ENCODE measurements at regions of chr14 and their contacts with region 1.

Region 1: GRCh38 chr14:95196290-95196689 is 39.0 kb upstream of the DICER1 start:
- DNase-seq: peak in 6 of 9 donors; percentile 3 to 40 (median 29)
- ATAC-seq: peak; percentile 73
- H3K4me3 ChIP-seq: no peak overlapping the region
- H3K4me3 Mint-ChIP-seq: no peak overlapping the region
- H3K27ac ChIP-seq: no peak overlapping the region
- H3K27ac Mint-ChIP-seq: no peak overlapping the region
- H3K4me1 ChIP-seq: no peaks in the 10 kb centered on the region
- H3K4me1 Mint-ChIP-seq: peaks cover 0 to 8% (median 5%) of the 10 kb centered on the region in 7 donors
- H3K27me3 ChIP-seq: no peaks in the 10 kb centered on the region
- H3K27me3 Mint-ChIP-seq: no peaks in the 10 kb centered on the region

Region 2: DNA sequence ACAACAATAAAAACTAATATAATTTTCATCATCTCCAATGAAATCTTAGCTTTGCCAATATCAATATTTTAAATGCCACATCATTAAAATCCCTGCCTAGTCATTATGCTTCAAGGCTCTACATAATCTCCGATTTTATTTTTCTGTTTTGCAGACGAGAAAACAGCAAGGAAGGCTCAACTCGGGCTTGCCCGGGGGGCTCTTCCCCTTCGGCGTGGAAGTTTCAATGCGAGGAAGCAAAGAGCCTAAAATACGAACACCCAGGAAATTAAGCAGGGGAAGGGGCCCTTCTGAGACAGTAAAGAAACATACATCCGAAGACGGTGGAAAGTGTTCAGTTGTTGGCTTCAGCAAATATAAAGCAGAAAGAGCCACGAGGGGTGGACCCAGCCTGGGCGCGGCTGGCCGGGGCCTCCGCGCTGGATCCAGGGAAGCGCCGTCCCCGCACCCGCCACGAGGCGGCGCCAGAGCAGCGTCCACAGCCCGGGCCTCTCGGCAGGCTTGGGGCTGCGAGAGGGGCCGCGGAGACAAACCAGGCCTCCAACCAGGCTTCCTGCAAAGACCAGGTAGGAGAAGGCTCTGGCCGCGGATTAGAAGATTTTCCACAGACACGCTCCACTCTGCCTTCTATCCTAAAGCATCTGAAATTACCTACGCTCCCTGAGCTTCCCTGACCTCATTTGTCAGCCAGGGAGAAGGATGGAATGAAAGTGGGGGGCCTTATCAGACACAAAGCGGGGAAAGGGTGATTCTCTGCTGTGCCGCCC is 506.9 kb before region 1 on chr14:
- CTCF ChIA-PET with region 1: no interaction called
- POLR2A ChIA-PET with region 1: no interaction called
- intact Hi-C with region 1: loop called in 1 of 2 experiments (anchors 2 kb)
- DNase-seq: peak in 6 of 9 donors; percentile 5 to 66 (median 23)
- ATAC-seq: peak; percentile 76
- H3K4me3 ChIP-seq: no peak overlapping the region
- H3K4me3 Mint-ChIP-seq: peak overlapping the region in 1 of 10 donors; percentile 1
- H3K27ac ChIP-seq: no peak overlapping the region
- H3K27ac Mint-ChIP-seq: no peak overlapping the region
- H3K4me1 ChIP-seq: no peaks in the 10 kb centered on the region
- H3K4me1 Mint-ChIP-seq: peaks cover 0 to 4% (median 0%) of the 10 kb centered on the region in 7 donors
- H3K27me3 ChIP-seq: no peaks in the 10 kb centered on the region
- H3K27me3 Mint-ChIP-seq: peaks cover 8 to 27% (median 18%) of the 10 kb centered on the region in 5 donors

Region 3: GRCh38 chr14:95098984-95099599 is 97.2 kb before region 1 on chr14:
- CTCF ChIA-PET with region 1: no interaction called
- POLR2A ChIA-PET with region 1: no interaction called
- intact Hi-C with region 1: loop called in 1 of 2 experiments (anchors 1 kb)
- DNase-seq: peak in 6 of 9 donors; percentile 14 to 36 (median 27)
- ATAC-seq: peak; percentile 64
- H3K4me3 ChIP-seq: no peak overlapping the region
- H3K4me3 Mint-ChIP-seq: no peak overlapping the region
- H3K27ac ChIP-seq: no peak overlapping the region
- H3K27ac Mint-ChIP-seq: peak overlapping the region in 3 of 9 donors; percentile 4 to 52 (median 51)
- H3K4me1 ChIP-seq: no peaks in the 10 kb centered on the region
- H3K4me1 Mint-ChIP-seq: peaks cover 10 to 41% (median 33%) of the 10 kb centered on the region in 7 donors
- H3K27me3 ChIP-seq: no peaks in the 10 kb centered on the region
- H3K27me3 Mint-ChIP-seq: no peaks in the 10 kb centered on the region

Region 4: DNA sequence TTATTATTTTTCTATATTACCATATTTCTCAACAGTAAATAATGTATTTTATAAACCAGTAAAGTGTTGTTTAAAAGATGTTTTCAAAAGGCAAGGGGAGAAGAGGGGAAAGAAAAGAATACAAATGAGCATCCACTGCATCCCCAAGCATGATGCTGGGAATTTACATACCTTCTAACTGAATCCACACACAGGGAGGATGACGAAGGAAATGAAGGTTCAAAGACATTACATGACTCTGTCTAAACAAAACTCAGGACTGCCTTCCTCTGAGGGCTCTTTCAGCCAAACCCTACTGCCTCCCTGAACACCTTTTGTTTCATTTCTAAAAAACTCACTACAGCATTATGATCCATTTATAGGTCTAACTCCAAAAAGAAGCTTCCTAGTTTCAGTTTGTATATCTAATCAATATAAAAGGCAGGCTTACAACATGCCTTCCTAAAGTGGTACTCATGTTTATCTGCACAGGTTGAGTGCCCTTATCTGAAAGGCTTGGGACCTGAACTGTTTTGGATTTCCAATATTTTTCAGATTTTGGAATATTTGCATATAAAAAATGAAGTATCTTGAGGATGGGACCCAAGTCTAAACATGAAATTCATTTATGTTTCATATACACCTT is 69.3 kb before region 1 on chr14:
- CTCF ChIA-PET with region 1: no interaction called
- POLR2A ChIA-PET with region 1: no interaction called
- intact Hi-C with region 1: loop called in 1 of 2 experiments (anchors 1 kb)
- DNase-seq: no peak
- ATAC-seq: no peak
- H3K4me3 ChIP-seq: no peak overlapping the region
- H3K4me3 Mint-ChIP-seq: no peak overlapping the region
- H3K27ac ChIP-seq: no peak overlapping the region
- H3K27ac Mint-ChIP-seq: peak overlapping the region in 2 of 9 donors; percentile 29 to 72
- H3K4me1 ChIP-seq: no peaks in the 10 kb centered on the region
- H3K4me1 Mint-ChIP-seq: peaks cover 9 to 42% (median 23%) of the 10 kb centered on the region in 7 donors
- H3K27me3 ChIP-seq: no peaks in the 10 kb centered on the region
- H3K27me3 Mint-ChIP-seq: no peaks in the 10 kb centered on the region

Region 5: DNA sequence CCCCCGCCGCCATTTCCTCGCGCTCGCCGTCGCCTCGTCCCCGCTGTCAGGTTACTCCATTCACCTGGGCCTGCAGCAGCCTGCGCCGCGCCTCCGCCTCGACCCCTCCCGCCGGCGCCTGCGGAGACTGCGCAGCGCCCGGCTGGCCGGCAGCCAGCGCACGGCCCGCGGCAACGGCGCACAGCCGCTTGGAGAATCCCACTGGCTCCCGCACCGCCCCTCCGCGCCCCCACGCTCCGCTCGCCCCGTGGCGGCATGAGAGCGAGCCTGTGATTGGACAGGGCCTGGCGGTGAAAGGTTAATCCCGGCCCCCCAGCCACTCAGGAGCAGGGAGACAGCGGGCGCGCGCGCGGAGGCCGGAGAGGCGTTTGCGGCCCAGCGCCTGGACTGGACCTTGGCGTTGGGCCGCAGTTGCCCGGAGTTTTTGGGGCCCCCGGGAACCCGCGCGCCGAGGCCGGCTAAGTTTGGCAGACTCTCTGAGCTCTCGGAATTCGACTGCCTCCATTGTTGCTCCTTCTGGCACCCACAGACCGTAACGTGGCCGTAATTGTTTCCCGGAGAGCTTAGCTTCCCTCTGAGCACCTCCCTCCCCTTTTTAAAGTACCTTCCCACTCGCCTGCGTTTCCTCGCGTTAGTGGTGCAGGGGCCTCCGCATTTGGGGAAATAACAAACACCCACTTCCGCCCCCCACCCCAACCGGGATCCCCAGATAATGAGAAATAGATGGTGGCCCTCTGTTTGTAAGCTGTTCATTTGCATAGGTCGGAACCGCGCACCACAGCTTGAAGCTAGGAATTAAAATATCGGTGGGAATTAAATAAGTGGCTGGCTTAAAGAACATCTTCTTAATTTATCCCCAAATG is 38.7 kb before region 1 on chr14 and contains the start of gene DICER1:
- CTCF ChIA-PET with region 1: interaction called, 3 read pairs
- POLR2A ChIA-PET with region 1: no interaction called
- intact Hi-C with region 1: loop called in 1 of 2 experiments (anchors 1 kb)
- DNase-seq: peak; percentile 84 to 98 (median 93)
- ATAC-seq: peak; percentile 92
- H3K4me3 ChIP-seq: peak within 1 kb of the TSS; percentile 87
- H3K4me3 Mint-ChIP-seq: peak within 1 kb of the TSS; percentile 94 to 99 (median 98)
- H3K27ac ChIP-seq: peak within 1 kb of the TSS; percentile 82
- H3K27ac Mint-ChIP-seq: peak within 1 kb of the TSS; percentile 97 to 100 (median 99)
- H3K4me1 ChIP-seq: peaks cover 31 to 36% of the 10 kb centered on the region in 2 donors
- H3K4me1 Mint-ChIP-seq: peaks cover 32 to 55% (median 42%) of the 10 kb centered on the region in 7 donors
- H3K27me3 ChIP-seq: no peaks in the 10 kb centered on the region
- H3K27me3 Mint-ChIP-seq: no peaks in the 10 kb centered on the region
- total RNA-seq, gene DICER1: 61.1 to 78.2 (median 67.4) TPM

Region 6: DNA sequence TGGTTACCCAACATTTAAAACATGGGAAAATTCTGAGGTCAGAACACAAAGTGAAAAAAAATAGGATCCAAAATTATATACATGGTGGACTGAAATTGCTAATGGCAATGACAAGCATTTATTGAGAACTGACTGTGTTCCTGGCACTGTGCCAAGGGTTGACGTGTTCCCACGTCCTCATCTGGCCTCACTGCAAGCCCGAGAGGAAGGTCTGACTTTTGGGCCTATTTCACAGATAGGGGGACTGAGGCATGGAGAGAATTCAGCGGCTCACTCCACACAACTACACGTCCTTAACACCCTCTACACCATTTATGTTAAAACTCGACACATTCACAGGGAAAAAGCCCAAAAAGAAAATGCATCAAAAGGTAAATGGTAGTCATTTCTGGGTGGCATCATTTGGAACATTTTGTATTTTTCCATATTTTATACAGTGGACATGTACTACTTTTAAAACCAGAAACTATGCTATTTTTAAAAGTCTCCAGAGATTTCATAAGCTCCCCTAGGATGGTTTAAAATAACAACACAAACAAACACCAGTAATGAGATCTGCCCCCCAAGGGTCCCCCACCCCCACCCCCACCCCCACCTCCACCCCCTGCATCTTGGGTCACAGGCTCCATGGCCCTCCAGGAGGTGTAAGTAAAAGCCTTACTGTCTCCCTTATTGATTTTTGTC is 95.7 kb after region 1 on chr14:
- CTCF ChIA-PET with region 1: no interaction called
- POLR2A ChIA-PET with region 1: no interaction called
- intact Hi-C with region 1: no loop called
- DNase-seq: peak in 1 of 9 donors; percentile 4
- ATAC-seq: no peak
- H3K4me3 ChIP-seq: no peak overlapping the region
- H3K4me3 Mint-ChIP-seq: no peak overlapping the region
- H3K27ac ChIP-seq: no peak overlapping the region
- H3K27ac Mint-ChIP-seq: no peak overlapping the region
- H3K4me1 ChIP-seq: no peaks in the 10 kb centered on the region
- H3K4me1 Mint-ChIP-seq: no peaks in the 10 kb centered on the region
- H3K27me3 ChIP-seq: no peaks in the 10 kb centered on the region
- H3K27me3 Mint-ChIP-seq: peaks cover 9 to 40% (median 30%) of the 10 kb centered on the region in 5 donors